ENCODE measurements at regions of chr5 and their contacts with region 1.

Region 1: DNA sequence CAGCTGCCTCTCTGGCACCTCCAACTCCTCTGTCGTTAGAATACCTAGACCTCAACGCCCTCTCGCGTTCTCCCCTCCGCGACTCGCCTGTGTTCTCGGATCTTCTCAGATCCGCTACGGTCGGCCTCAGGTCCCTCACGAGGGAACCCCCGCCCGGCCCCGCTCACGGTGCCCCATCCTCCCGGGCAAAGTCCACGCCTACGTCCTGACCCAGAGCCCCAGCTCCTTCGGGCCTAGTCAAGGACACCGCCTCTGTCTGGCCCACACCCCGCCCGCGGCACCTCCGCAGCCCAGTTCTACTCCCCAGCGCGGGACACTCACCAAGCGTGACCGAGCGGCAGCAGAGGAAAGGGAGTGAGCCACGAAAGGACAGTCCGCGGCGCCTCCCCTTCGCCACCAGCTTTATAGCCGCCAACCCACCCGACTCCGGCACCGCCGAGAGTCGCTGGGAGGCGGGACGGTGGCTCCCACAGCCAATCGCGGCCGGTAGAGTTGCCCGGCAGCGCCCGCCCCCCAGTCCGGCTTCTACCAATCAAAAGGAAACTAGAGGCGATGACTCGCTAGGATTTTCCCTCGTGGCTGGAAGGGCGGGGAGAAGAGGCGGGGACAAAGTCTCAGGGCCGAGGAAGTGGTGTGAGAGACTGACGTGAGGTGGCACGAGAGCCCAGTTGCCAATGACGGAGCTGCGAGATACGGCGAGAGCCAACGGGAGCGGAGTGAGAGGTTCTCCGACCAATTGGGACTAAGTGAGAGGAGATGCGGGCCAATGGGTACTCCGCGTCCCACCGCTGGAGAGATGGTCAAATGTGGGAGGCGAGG is at the start of gene HMGCS1:
- DNase-seq: peak; percentile 99
- H3K4me3 ChIP-seq: peak within 1 kb of the TSS; percentile 58 to 89 (median 75)
- H3K27ac ChIP-seq: peak within 1 kb of the TSS; percentile 87 to 94 (median 89)
- H3K4me1 ChIP-seq: peaks cover 0 to 28% (median 18%) of the 10 kb centered on the region in 4 donors
- H3K27me3 ChIP-seq: no peaks in the 10 kb centered on the region
- CTCF ChIP-seq: no peak
- EP300 ChIP-seq: no peak
- POLR2A ChIP-seq: peak; percentile 90 to 96
- total RNA-seq, gene HMGCS1: 13.0 to 20.7 (median 16.0) TPM

Region 2: GRCh38 chr5:42495914-42496313 is 817.3 kb before region 1 on chr5:
- intact Hi-C with region 1: loop called (anchors 10 kb)
- DNase-seq: no peak
- H3K4me3 ChIP-seq: no peak overlapping the region
- H3K27ac ChIP-seq: peak overlapping the region in 3 of 4 donors; percentile 11 to 22 (median 19)
- H3K4me1 ChIP-seq: peaks cover 0 to 72% (median 49%) of the 10 kb centered on the region in 4 donors
- H3K27me3 ChIP-seq: no peaks in the 10 kb centered on the region
- CTCF ChIP-seq: no peak
- EP300 ChIP-seq: no peak
- POLR2A ChIP-seq: no peak

Region 3: GRCh38 chr5:42994246-42995151 is 318.7 kb before region 1 on chr5:
- intact Hi-C with region 1: loop called (anchors 10 kb)
- DNase-seq: peak; percentile 90
- H3K4me3 ChIP-seq: peak overlapping the region; percentile 10 to 53 (median 29)
- H3K27ac ChIP-seq: peak overlapping the region; percentile 61 to 88 (median 73)
- H3K4me1 ChIP-seq: peaks cover 0 to 28% (median 16%) of the 10 kb centered on the region in 4 donors
- H3K27me3 ChIP-seq: peaks cover 46 to 100% (median 90%) of the 10 kb centered on the region in 3 donors
- CTCF ChIP-seq: peak; percentile 57 to 86 (median 81)
- EP300 ChIP-seq: no peak
- POLR2A ChIP-seq: no peak

Region 4: GRCh38 chr5:43040287-43041098 is 272.8 kb before region 1 on chr5 and contains the start of gene ANXA2R:
- intact Hi-C with region 1: no loop called
- DNase-seq: peak; percentile 92
- H3K4me3 ChIP-seq: peak within 1 kb of the TSS; percentile 60 to 67 (median 64)
- H3K27ac ChIP-seq: peak within 1 kb of the TSS; percentile 89 to 92 (median 89)
- H3K4me1 ChIP-seq: peaks cover 0 to 47% (median 31%) of the 10 kb centered on the region in 4 donors
- H3K27me3 ChIP-seq: peaks cover 20 to 89% (median 50%) of the 10 kb centered on the region in 3 donors
- CTCF ChIP-seq: peak; percentile 49 to 78 (median 62)
- EP300 ChIP-seq: no peak
- POLR2A ChIP-seq: peak in 1 of 2 donors; percentile 12
- total RNA-seq, gene ANXA2R: 1.8 to 4.4 (median 3.7) TPM

Region 5: DNA sequence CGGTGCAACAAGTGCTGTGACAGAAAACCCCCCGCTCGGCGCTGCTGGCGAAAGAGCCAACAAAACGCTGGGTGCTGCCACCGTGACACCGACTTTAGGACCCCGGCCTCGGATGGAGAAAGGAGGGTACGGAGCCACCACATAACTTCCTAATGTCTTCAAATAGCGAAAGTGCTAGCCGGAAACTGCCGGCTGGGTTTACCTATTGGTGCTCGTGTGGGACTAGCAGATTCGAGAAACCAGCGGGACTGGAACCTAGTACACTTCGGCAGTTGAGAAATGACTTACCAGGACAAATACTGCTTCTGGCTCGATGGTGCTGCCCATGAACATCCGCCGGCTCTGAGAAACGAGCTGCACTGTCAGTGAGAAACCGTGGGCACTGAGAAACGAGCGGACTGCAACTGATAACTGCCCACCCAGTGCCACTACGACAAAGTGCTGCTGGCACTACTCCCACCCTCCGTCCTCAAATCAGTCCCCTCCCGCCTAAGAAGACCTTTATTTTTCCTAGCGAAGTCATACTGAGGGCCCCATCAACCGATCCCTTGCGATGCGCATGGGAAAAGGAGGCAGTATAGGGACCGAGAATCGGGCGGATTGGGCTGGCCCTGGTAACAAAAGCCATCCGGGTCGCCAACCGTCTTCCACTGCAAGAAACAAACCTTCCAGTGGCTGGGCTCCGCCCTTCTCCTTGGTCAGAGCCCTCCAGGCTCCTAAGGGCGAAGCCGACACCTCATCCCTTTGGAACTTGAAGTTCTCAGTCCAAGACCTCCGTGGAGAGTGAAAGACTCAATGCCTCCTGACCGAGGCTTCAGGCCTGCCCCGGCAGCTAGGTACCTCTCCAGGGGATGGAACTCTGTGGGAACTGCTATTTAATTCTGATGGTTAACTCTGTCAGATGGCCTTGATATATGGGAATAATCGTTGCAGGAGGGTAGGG is 246.2 kb before region 1 on chr5:
- intact Hi-C with region 1: loop called (anchors 5 kb)
- DNase-seq: peak; percentile 93
- H3K4me3 ChIP-seq: peak overlapping the region; percentile 65 to 91 (median 80)
- H3K27ac ChIP-seq: peak overlapping the region; percentile 94 to 100 (median 98)
- H3K4me1 ChIP-seq: peaks cover 0 to 38% (median 25%) of the 10 kb centered on the region in 4 donors
- H3K27me3 ChIP-seq: no peaks in the 10 kb centered on the region
- CTCF ChIP-seq: no peak
- EP300 ChIP-seq: no peak
- POLR2A ChIP-seq: peak; percentile 78 to 83

Region 6: GRCh38 chr5:43191740-43192557 is 121.3 kb before region 1 on chr5 and contains the start of gene NIM1K:
- intact Hi-C with region 1: loop called (anchors 5 kb)
- DNase-seq: peak; percentile 87
- H3K4me3 ChIP-seq: peak within 1 kb of the TSS; percentile 36 to 74 (median 59)
- H3K27ac ChIP-seq: peak within 1 kb of the TSS; percentile 58 to 62 (median 60)
- H3K4me1 ChIP-seq: peaks cover 0 to 28% (median 18%) of the 10 kb centered on the region in 4 donors
- H3K27me3 ChIP-seq: no peaks in the 10 kb centered on the region
- CTCF ChIP-seq: no peak
- EP300 ChIP-seq: no peak
- POLR2A ChIP-seq: no peak
- total RNA-seq, gene NIM1K: 0.28 to 3.6 (median 0.83) TPM

Region 7: GRCh38 chr5:43514816-43515677 is 201.8 kb after region 1 on chr5 and contains the start of gene C5orf34:
- intact Hi-C with region 1: loop called (anchors 10 kb)
- DNase-seq: peak; percentile 98
- H3K4me3 ChIP-seq: peak within 1 kb of the TSS; percentile 49 to 67 (median 62)
- H3K27ac ChIP-seq: peak within 1 kb of the TSS; percentile 84 to 91 (median 88)
- H3K4me1 ChIP-seq: peaks cover 0 to 24% (median 20%) of the 10 kb centered on the region in 4 donors
- H3K27me3 ChIP-seq: no peaks in the 10 kb centered on the region
- CTCF ChIP-seq: no peak
- EP300 ChIP-seq: no peak
- POLR2A ChIP-seq: peak; percentile 59 to 64
- total RNA-seq, gene C5orf34: 1.1 to 4.3 (median 1.8) TPM

Measured in sigmoid colon (tissue), 7 donors.